ENCODE measurements at regions of chr6 and their contacts with region 1.

Region 1: DNA sequence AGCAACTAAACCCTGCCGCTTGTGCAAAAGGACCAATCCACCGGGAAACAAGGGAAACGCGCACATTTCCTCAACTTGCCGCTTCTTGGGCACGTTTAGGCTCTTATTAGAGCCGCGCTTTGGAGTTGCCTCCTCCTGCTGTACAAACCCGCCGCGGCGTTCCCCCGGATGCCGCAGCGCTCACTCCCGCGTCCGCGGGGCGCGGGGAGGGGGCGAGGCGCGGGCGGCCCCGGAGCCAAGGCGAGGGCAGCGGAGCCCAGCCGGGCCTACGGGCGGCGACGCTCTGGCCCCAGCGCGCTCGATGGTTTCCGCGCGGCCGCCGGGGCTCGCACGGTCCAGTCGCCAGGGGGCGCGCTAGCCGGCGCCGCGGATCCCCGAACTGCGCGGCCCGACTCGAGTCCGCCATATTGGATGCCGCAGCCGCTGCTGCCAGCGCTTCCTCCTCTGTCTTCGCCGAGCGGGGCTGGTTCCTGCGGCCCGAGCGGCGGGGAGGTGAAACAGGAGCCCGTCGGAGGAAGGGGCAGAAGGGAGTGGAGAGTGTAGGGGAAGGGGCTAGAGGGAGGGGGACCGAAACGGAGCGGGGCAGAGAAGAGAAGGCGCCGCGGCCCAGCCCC is at the start of gene SCAF8:
- DNase-seq: peak; percentile 85
- H3K4me3 Mint-ChIP-seq: peak within 1 kb of the TSS; percentile 97
- H3K27ac Mint-ChIP-seq: peak within 1 kb of the TSS; percentile 96
- H3K4me1 Mint-ChIP-seq: peaks cover 33% of the 10 kb centered on the region
- H3K27me3 Mint-ChIP-seq: peaks cover 4% of the 10 kb centered on the region
- total RNA-seq, gene SCAF8: 37.7 and 40.9 TPM in 2 replicates

Region 2: DNA sequence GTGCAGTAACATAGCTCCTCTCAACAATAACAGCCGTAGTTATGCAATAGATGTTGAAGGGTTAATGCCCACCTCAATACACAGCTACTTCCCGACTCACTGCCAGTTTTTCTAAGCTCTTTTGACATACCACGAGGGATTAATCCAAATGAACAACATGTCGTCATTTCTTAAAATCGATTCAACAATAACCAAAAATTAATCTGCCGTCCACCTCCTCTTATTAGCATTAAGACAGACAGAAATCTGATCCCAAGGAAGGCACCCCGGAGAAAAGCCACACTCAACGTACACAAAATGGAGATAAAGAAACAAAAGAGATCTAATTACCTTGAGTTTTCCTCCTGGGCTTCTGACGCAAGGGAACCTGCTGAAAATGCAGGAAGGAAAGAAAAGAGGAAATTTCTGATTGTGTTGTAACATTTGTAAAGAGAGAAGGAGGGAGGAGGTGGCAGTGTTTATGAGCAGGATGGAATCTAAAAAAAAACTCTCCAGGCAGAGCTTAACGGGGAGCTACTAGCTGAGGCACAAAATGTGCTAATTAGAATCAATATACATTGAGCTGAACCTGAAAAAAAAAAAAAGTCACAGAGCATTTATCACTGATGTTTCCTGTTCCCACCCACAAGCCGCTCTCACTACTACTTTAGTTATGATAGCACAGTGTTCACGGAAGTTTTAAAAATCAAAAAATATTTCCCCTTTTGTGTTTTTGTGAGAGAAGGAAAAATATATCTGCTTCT is 485.8 kb before region 1 on chr6:
- intact Hi-C with region 1: loop called (anchors 10 kb)
- DNase-seq: no peak
- H3K4me3 Mint-ChIP-seq: peak overlapping the region; percentile 85
- H3K27ac Mint-ChIP-seq: peak overlapping the region; percentile 76
- H3K4me1 Mint-ChIP-seq: peaks cover 87% of the 10 kb centered on the region
- H3K27me3 Mint-ChIP-seq: no peaks in the 10 kb centered on the region

Region 3: GRCh38 chr6:154675602-154676088 is 57.5 kb before region 1 on chr6:
- intact Hi-C with region 1: loop called (anchors 1 kb)
- DNase-seq: peak; percentile 77
- H3K4me3 Mint-ChIP-seq: no peak overlapping the region
- H3K27ac Mint-ChIP-seq: no peak overlapping the region
- H3K4me1 Mint-ChIP-seq: no peaks in the 10 kb centered on the region
- H3K27me3 Mint-ChIP-seq: peaks cover 4% of the 10 kb centered on the region

Region 4: DNA sequence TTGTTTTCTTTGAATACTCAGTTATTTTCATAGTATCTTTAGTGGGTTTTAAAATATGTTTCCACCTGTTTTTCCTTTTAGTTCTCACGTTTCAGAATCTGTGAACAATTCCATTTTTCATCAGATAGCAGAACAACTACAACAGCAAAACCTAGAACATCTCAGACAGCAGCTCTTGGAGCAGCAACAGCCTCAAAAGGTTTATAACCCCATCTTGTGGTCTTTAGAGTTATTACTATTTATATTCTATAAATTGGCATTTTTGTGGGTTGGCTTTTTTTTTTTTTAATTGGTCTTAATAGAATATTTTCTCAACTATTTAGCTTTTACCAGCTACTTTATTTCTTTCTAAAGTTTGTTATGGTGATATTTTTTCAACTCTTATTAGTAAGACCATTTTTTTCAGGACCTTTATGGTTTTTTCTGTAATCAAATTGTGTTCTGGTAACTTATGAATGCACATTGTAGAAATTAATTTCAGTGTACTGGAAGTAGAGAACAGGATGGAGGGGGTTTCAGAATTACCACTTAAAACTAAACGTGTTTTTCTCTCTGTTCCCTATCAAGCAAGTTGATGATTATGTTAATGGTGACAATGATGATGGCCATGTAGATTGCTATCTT is 72.3 kb after region 1 on chr6:
- intact Hi-C with region 1: loop called (anchors 1 kb)
- DNase-seq: no peak
- H3K4me3 Mint-ChIP-seq: no peak overlapping the region
- H3K27ac Mint-ChIP-seq: no peak overlapping the region
- H3K4me1 Mint-ChIP-seq: peaks cover 4% of the 10 kb centered on the region
- H3K27me3 Mint-ChIP-seq: no peaks in the 10 kb centered on the region

Region 5: DNA sequence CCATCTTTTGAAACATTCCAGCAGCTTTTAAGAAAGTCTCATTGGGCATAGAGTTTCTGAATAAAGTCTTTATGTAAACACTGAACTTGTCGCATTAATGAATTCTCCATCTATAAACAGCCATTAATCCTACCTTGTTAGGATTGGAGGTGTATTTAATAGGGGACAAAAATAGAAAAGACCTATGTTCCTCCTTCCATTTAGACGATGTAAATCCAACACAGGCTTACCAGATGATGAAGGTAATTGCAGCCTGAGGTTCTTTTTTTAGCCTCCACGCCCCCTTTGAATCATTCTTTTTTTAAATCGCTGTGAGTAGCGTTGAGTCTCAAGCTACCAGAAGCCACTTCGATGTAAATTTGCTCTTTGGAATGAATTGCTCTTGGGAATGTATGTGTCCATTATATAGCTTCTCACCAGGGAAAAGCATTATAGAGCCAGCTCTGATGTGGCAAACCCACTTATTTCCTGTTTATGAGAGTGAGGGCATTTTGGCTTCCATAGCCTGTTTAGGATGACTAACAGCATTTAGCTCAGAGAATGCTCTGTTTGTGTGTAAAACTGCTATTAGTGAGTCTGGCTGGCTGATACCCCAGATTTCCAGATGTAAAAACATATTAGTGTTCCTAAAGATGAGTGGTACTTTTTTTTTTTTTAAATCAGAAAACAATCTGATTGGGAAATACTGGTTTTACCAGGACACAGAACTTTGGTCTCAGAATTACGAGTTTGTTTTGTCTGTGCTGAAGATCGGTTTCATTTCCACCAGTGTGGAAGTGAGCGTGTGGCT is 455.8 kb after region 1 on chr6:
- intact Hi-C with region 1: loop called (anchors 5 kb)
- DNase-seq: no peak
- H3K4me3 Mint-ChIP-seq: peak overlapping the region; percentile 52
- H3K27ac Mint-ChIP-seq: peak overlapping the region; percentile 86
- H3K4me1 Mint-ChIP-seq: peaks cover 51% of the 10 kb centered on the region
- H3K27me3 Mint-ChIP-seq: no peaks in the 10 kb centered on the region